Calu3 (cell line): ENCODE measurements at regions of chr5 and their contacts with region 1.

Region 1: DNA sequence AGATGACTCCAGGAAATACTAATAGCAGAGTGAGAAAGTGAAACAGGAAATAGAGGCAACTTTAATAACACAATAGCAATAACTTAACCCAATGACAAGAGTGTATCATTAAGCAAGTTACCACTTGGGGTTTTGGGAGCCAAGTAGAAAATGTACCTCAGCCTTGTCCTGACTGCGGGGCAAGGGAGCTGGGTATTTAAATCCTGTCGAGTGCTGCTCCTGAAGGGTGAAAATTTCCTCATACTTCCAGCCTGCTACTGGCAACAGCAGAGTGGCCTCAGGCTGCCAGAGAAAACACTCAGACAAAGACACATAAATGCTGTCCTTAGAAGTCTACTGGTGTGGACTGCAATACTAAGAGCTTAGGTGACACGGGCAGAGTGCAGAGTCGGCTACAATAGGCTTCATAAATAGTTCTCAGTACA is 112.5 kb upstream of the EMB start:
- DNase-seq: peak; percentile 31
- H3K4me3 Mint-ChIP-seq: peak overlapping the region; percentile 38
- H3K27ac Mint-ChIP-seq: peak overlapping the region; percentile 66
- H3K4me1 Mint-ChIP-seq: peaks cover 7% of the 10 kb centered on the region
- H3K27me3 Mint-ChIP-seq: no peaks in the 10 kb centered on the region
- CTCF ChIP-seq: no peak

Region 2: DNA sequence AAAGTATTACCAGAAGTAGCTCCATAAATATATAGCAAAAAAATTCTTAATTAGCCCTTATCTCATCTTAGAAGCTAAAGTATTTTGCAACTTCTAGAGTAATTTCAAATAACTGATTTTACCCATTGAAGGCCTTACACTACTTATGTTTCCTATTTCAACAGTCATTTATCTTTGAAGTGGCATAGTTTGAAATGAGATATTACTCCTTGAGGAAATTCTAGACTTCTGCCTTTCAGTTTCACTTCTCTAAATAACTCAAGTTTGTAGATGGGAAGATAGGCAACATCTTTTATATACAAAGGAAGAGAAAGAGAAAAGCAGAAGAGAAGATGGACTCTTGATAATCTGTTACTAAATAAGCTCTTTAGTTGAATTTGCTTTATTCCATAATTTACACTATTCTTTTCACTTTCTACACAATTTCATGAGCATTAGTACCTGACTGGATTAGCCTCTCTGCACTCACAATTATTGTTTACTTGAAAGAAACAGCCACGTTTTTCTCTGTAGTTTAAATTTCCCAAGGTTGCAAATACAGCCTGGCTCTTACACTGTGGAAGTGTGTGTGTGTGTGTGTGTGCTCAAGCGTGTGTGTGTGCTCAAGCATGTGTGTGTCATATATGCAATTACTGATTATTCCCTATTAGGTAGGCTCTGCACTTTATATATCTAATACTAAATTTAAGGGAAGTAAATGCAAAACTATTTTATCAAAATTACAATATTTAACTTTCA is 51.9 kb before region 1 on chr5:
- CTCF ChIA-PET with region 1: no interaction called
- intact Hi-C with region 1: no loop called
- DNase-seq: no peak
- H3K4me3 Mint-ChIP-seq: no peak overlapping the region
- H3K27ac Mint-ChIP-seq: no peak overlapping the region
- H3K4me1 Mint-ChIP-seq: no peaks in the 10 kb centered on the region
- H3K27me3 Mint-ChIP-seq: peaks cover 8% of the 10 kb centered on the region
- CTCF ChIP-seq: no peak

Region 3: GRCh38 chr5:50595199-50595598 is 41.6 kb after region 1 on chr5:
- CTCF ChIA-PET with region 1: no interaction called
- intact Hi-C with region 1: loop called (anchors 5 kb)
- DNase-seq: no peak
- H3K4me3 Mint-ChIP-seq: no peak overlapping the region
- H3K27ac Mint-ChIP-seq: peak overlapping the region; percentile 60
- H3K4me1 Mint-ChIP-seq: peaks cover 45% of the 10 kb centered on the region
- H3K27me3 Mint-ChIP-seq: no peaks in the 10 kb centered on the region
- CTCF ChIP-seq: no peak

Region 4: DNA sequence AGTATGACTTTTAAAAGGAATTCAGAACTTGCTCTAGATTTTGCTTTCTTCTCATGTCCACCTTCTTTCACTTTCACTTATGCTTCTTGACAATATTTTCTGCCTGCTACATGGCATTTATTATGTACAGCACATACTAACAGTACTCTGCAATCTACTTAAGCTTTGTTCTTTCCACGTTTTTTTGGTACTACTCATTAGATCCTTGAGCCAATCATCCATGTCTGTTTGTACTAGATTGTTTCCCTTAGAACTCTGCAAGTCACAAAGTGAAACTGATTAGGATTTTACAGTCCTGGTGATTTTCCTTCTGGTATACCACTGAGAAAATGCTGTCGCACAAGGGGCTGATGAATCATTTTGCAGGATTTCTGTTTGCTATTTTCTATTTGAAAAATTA is 191.2 kb after region 1 on chr5:
- CTCF ChIA-PET with region 1: no interaction called
- intact Hi-C with region 1: loop called (anchors 2 kb)
- DNase-seq: no peak
- H3K4me3 Mint-ChIP-seq: peak overlapping the region; percentile 57
- H3K27ac Mint-ChIP-seq: peak overlapping the region; percentile 24
- H3K4me1 Mint-ChIP-seq: peaks cover 44% of the 10 kb centered on the region
- H3K27me3 Mint-ChIP-seq: no peaks in the 10 kb centered on the region
- CTCF ChIP-seq: no peak